Prostate gland (tissue), 2 donors: ENCODE measurements at regions of chr4 and their contacts with region 1.

Region 1: DNA sequence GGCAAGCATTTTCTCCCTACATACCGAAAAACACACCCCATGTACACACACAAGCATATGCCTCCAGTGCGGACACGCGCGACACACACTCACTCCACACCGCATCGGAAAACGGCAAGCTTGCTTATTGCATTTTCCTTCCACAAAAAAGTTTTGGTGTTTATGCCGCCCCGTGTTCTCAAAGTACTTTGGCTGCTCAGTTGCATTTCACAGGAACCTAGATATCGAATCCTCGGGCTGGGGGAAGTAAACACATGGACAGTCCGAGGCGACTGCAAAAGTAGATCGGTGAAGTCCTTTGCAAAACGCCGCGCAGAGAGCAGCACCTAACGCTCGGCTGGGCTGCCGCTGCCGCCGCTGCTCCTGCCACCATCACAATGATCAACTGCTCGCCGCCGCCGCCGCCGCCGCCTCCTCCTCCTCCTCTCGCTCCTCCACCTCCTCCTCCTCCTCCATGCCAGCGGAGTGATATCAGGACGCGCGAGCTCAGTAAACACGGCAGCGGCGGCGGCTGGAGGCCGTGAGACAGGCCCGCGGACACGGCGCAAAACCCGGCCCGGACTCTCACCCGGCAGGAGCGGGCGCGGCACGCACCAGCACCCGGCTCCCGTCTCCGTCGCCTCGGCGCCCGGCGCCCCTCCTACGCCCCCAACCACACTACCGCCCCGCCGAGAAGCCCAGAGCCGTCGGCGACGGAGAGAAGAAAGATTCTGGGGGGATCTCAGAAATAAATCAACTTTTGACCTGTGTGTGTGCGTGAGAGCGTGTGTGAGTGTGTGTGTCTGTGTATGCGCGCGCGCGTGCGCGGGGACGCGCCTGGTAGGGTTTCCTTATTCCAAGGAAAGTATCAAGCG is at the start of gene MAML3:
- DNase-seq: peak; percentile 95
- H3K4me3 ChIP-seq: peak within 1 kb of the TSS; percentile 79 to 80
- H3K27ac ChIP-seq: peak within 1 kb of the TSS; percentile 97 to 99
- H3K4me1 ChIP-seq: peaks cover 6% of the 10 kb centered on the region
- H3K27me3 ChIP-seq: no peaks in the 10 kb centered on the region
- CTCF ChIP-seq: peak in 1 of 4 experiments; percentile 27
- POLR2A ChIP-seq: peak; percentile 80
- total RNA-seq, gene MAML3: 15.0 to 30.6 TPM

Region 2: DNA sequence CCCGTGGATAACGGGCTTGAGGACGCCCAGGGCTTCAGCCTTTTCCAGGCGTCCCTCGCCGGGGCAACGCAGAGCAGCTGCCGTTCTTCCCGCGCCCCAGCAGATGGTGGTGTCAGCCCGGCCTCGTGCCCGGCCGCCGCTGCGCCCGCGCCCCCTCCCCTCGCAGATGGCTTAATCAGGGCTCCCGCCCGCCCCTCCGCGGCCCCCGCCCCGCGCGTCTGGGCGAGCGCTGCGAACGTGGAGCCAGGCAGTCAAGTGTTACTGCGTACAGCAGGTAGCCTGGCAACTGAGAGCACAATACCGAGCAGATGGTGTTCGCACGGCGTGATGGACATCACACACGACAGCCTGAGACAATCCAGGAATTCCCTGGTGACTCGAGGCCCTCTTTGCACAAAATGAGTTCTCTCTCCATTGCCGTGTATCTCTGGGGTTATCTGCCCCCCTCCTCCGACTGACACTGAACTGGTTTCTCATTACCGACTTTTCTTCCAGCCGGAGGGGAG is 419.0 kb before region 1 on chr4:
- intact Hi-C with region 1: loop called (anchors 2 kb)
- DNase-seq: peak; percentile 88
- H3K4me3 ChIP-seq: peak overlapping the region; percentile 31 to 39
- H3K27ac ChIP-seq: peak overlapping the region; percentile 75 to 80
- H3K4me1 ChIP-seq: peaks cover 2% of the 10 kb centered on the region
- H3K27me3 ChIP-seq: no peaks in the 10 kb centered on the region
- CTCF ChIP-seq: peak; percentile 75 to 95 (median 84)
- POLR2A ChIP-seq: no peak

Region 3: GRCh38 chr4:139919521-139919920 is 234.4 kb before region 1 on chr4:
- intact Hi-C with region 1: loop called (anchors 5 kb)
- DNase-seq: no peak
- H3K4me3 ChIP-seq: no peak overlapping the region
- H3K27ac ChIP-seq: peak overlapping the region; percentile 53 to 72
- H3K4me1 ChIP-seq: peaks cover 33% of the 10 kb centered on the region
- H3K27me3 ChIP-seq: no peaks in the 10 kb centered on the region
- CTCF ChIP-seq: no peak
- POLR2A ChIP-seq: no peak

Region 4: GRCh38 chr4:140049024-140049848 is 104.7 kb before region 1 on chr4:
- intact Hi-C with region 1: loop called (anchors 5 kb)
- DNase-seq: peak; percentile 71
- H3K4me3 ChIP-seq: peak overlapping the region; percentile 22 to 24
- H3K27ac ChIP-seq: peak overlapping the region; percentile 69 to 78
- H3K4me1 ChIP-seq: no peaks in the 10 kb centered on the region
- H3K27me3 ChIP-seq: no peaks in the 10 kb centered on the region
- CTCF ChIP-seq: peak in 3 of 4 experiments; percentile 37 to 50 (median 37)
- POLR2A ChIP-seq: no peak

Region 5: GRCh38 chr4:140252742-140253555 is 99.0 kb after region 1 on chr4:
- intact Hi-C with region 1: loop called (anchors 1 kb)
- DNase-seq: peak; percentile 68
- H3K4me3 ChIP-seq: peak overlapping the region; percentile 43 to 64
- H3K27ac ChIP-seq: peak overlapping the region; percentile 91 to 96
- H3K4me1 ChIP-seq: peaks cover 16% of the 10 kb centered on the region
- H3K27me3 ChIP-seq: no peaks in the 10 kb centered on the region
- CTCF ChIP-seq: peak; percentile 79 to 98 (median 88)
- POLR2A ChIP-seq: no peak